ENCODE measurements at regions of chr12 and their contacts with region 1.

Region 1: DNA sequence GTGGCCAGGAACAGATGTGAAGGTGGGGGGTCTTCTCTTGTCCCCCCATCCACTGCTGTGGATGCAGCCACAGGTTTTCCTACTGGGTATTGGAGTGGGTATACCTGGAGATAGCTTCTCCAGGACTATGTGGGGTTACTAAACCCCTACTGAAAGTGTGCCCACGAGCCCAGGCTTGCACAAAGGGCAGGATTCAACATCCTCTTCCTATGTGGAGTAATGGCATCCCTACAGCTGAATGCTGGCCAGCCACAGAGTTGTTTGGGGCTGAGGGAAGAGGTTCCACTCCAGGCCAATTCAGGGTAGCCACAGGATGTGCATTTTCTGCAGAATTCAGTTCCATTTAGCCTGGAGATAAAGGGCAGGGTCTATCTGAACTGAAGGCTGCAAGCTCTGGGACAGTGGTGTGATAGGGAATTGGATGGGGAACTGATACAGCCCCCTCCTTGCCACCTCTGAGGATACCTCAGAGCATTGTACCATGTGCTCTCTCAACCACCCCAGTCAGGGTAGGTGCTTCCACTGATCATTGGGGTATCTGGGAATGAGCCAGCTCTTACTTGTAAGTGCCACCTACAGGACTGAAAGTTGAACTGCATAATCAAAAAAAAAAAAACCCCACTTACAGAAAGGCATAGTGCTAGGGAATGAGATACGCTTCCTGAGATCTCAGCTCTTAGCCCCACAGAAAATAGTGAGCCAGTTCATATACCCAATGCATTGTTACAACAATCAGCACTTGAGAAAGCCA is 187.1 kb downstream of the KITLG start:
- DNase-seq: peak; percentile 22
- CTCF ChIP-seq: no peak

Region 2: DNA sequence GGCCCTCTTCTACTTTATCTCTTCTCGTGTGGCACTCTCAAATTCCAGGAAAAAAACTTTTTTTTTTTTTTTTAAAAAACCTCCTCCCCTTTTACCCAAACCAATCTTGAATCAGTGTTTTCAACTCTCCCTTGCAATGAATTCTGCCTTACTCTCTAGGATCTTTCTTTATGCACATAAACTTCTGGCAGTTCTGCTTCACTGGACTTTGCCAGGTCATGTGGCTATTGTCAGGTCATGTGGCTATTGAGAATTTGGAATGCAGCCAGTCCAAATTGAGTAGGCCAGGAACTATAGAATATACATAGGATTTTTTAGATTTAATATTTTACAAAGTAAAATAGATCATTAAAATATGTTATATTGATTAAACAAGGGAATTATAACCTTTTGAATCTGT is 32.9 kb before region 1 on chr12:
- CTCF ChIA-PET with region 1: no interaction called
- POLR2A ChIA-PET with region 1: no interaction called
- DNase-seq: no peak
- CTCF ChIP-seq: no peak

Region 3: DNA sequence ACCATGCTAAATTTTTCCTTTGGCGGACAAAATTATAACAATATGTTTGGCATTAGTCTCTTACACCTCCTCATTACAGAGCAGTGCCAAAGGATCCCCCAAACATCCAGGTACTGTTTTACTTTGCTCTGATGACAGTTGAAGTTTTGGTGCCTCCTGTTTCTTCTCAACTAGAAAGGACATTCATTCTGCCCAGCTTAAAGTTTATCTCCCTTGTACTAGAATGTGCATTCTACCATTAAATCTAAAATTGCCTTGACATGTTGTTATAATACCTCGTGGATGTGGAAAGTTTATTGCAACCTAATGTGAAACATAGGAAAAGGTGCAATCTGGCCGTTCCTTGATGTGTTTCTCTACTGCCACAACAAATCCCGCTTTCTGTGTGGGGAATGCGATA is 13.7 kb after region 1 on chr12:
- CTCF ChIA-PET with region 1: interaction called, 11 read pairs
- POLR2A ChIA-PET with region 1: no interaction called
- DNase-seq: no peak
- CTCF ChIP-seq: no peak

Region 4: DNA sequence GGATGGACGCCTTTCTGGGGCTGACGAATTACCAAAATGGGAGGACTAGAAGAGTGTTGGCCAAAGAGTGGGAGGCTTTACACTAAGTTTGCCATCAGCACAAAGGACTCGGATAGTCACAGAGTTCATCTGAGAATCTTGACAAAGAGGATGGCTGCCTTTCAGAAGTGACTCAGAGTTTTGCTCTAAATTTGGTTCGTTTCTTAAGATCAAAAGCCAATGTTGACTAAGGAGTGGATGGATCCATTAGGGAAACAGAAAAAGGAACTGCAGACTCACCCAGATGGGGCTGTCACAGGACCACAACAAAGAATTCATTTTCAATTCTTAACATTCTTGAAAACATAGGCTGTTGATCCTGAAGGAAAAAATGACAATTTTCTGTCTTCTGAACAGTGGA is 1040.4 kb after region 1 on chr12:
- CTCF ChIA-PET with region 1: no interaction called
- POLR2A ChIA-PET with region 1: no interaction called
- DNase-seq: no peak
- CTCF ChIP-seq: no peak